Tibial artery (tissue), 4 donors: ENCODE measurements at regions of chr9 and their contacts with region 1.

Region 1: GRCh38 chr9:125200210-125201047 is at the start of gene RABEPK:
- DNase-seq: peak; percentile 95 to 96
- H3K4me3 ChIP-seq: peak within 1 kb of the TSS; percentile 62 to 67
- H3K27ac ChIP-seq: peak within 1 kb of the TSS; percentile 82 to 90
- H3K4me1 ChIP-seq: peaks cover 0 to 11% (median 8%) of the 10 kb centered on the region in 4 donors
- H3K27me3 ChIP-seq: no peaks in the 10 kb centered on the region
- CTCF ChIP-seq: no peak

Region 2: GRCh38 chr9:125241000-125241862 is 40.8 kb after region 1 on chr9 and contains the start of gene HSPA5:
- intact Hi-C with region 1: loop called (anchors 1 kb)
- DNase-seq: peak; percentile 100
- H3K4me3 ChIP-seq: peak within 1 kb of the TSS; percentile 90 to 94
- H3K27ac ChIP-seq: peak within 1 kb of the TSS; percentile 95 to 96
- H3K4me1 ChIP-seq: peaks cover 0 to 54% (median 39%) of the 10 kb centered on the region in 4 donors
- H3K27me3 ChIP-seq: no peaks in the 10 kb centered on the region
- CTCF ChIP-seq: peak; percentile 10 to 19